Left colon (tissue), 2 donors: ENCODE measurements at regions of chr15 and their contacts with region 1.

Region 1: DNA sequence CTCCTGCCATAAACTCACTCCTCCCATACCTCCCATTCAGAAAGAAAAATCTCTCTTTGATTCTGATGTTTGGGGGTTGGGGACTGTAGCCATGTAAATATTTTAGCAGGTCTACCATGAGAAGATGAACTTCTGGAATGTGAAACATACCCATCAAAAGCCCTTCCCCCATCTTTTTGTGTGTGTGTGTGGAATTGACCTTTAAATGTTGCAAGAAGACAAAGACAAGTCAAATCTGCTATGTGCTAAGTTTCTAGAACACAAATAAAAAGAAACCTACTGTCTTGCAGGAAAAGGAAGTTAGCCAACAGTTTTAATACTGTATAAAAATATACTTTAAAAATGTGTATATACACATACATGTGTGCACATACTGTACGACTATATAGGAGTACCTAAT is 29.7 kb upstream of the USP50 start:
- DNase-seq: no peak
- ATAC-seq: no peak

Region 2: DNA sequence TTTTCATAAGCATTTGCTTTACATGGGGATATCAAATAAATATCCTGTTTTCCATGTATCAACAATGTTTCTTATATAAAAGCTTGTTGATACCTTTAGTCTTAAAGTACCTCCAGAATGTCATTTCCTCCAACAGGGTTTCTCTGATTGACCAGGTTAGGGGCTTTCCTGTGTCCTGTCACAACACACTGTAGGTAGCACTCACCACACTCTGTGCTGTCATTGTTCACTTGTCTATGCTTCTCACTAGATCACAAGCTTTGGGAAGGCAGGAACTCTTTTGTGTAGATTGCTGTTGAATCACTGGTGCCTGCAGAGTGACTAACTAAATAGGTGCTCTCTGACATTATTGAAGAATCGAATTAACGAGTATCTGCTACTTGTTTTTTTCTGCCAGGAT is 79.5 kb before region 1 on chr15:
- intact Hi-C with region 1: loop called in 1 of 2 experiments (anchors 10 kb)
- DNase-seq: no peak
- ATAC-seq: no peak